B cell (primary cell): ENCODE measurements at regions of chr3 and their contacts with region 1.

Region 1: GRCh38 chr3:53045518-53046170 is at the start of gene SFMBT1:
- DNase-seq: peak; percentile 92
- ATAC-seq: peak; percentile 51
- H3K4me3 ChIP-seq: peak within 1 kb of the TSS; percentile 41 to 94 (median 84)
- H3K4me3 Mint-ChIP-seq: peak within 1 kb of the TSS; percentile 98
- H3K27ac ChIP-seq: peak within 1 kb of the TSS; percentile 83 to 88
- H3K27ac Mint-ChIP-seq: peak within 1 kb of the TSS; percentile 99
- H3K4me1 ChIP-seq: peaks cover 19 to 30% of the 10 kb centered on the region in 2 donors
- H3K4me1 Mint-ChIP-seq: peaks cover 43% of the 10 kb centered on the region
- H3K27me3 ChIP-seq: no peaks in the 10 kb centered on the region
- H3K27me3 Mint-ChIP-seq: no peaks in the 10 kb centered on the region
- CTCF ChIP-seq: no peak
- total RNA-seq, gene SFMBT1: 55.8 and 60.3 TPM in 2 replicates

Region 2: DNA sequence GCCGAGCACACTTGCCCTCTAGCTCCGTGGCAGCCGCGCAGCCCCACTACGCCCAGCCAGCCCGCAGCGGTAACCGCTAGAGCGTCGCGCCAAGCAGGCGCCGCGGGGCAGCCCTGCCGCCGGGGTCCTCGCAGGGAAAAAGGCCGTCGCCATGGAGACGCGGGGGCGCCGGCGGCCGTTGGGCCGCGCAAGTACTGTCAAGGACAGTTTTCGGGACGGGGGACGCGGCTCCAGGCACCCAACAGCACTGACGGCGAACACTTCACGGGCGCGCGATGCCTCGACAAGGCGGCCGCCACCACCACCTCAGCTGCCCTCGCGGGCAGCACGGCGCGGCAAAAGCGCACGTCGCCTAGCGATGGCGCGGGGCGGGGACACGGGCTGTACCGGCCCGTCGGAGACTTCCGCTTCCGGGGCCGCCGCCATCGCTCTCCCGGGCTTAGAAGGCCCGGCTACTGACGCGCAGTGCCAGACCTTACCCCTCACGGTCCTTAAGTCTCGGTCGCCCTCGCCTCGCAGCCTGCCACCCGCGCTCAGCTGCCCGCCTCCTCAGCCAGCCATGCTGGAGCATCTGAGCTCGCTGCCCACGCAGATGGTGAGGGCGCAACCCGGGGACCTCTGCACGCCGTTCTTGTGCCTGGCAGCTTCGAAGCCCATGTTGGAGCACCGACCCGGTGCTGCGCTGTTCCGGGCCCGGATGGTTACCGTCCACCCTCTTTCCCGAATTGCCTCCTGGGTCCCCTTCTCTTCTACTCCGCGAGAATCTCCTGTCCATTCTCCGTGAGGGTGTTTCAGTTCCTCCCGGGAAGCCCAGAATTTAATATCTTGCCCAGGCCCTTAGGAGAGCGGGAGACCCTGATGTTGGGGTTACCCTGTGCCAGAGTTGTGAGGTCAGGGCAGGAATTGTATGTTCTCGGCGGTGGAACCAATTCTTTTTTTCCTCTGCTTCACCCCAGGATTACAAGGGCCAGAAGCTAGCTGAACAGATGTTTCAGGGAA is 339.7 kb before region 1 on chr3 and contains the starts of genes GLT8D1 and SPCS1:
- CTCF ChIA-PET with region 1: no interaction called
- POLR2A ChIA-PET with region 1: no interaction called
- intact Hi-C with region 1: loop called (anchors 2 kb)
- DNase-seq: peak; percentile 97
- ATAC-seq: peak; percentile 86
- H3K4me3 ChIP-seq: peak within 1 kb of the TSS; percentile 75 to 91 (median 82)
- H3K4me3 Mint-ChIP-seq: peak within 1 kb of the TSS; percentile 96
- H3K27ac ChIP-seq: peak within 1 kb of the TSS; percentile 66 to 95
- H3K27ac Mint-ChIP-seq: peak within 1 kb of the TSS; percentile 97
- H3K4me1 ChIP-seq: peaks cover 40 to 44% of the 10 kb centered on the region in 2 donors
- H3K4me1 Mint-ChIP-seq: peaks cover 46% of the 10 kb centered on the region
- H3K27me3 ChIP-seq: no peaks in the 10 kb centered on the region
- H3K27me3 Mint-ChIP-seq: no peaks in the 10 kb centered on the region
- CTCF ChIP-seq: no peak
- total RNA-seq, gene GLT8D1: 28.7 and 32.5 TPM in 2 replicates
- total RNA-seq, gene SPCS1: 54.3 and 64.5 TPM in 2 replicates

Region 3: GRCh38 chr3:52770496-52771333 is 274.9 kb before region 1 on chr3 and contains the start of gene NEK4:
- CTCF ChIA-PET with region 1: interaction called, 9 read pairs
- POLR2A ChIA-PET with region 1: interaction called, 3 read pairs
- intact Hi-C with region 1: loop called (anchors 2 kb)
- DNase-seq: peak; percentile 93
- ATAC-seq: peak; percentile 96
- H3K4me3 ChIP-seq: peak within 1 kb of the TSS; percentile 57 to 85 (median 70)
- H3K4me3 Mint-ChIP-seq: peak within 1 kb of the TSS; percentile 99
- H3K27ac ChIP-seq: peak within 1 kb of the TSS; percentile 71 to 89
- H3K27ac Mint-ChIP-seq: peak within 1 kb of the TSS; percentile 98
- H3K4me1 ChIP-seq: peaks cover 9 to 12% of the 10 kb centered on the region in 2 donors
- H3K4me1 Mint-ChIP-seq: peaks cover 18% of the 10 kb centered on the region
- H3K27me3 ChIP-seq: no peaks in the 10 kb centered on the region
- H3K27me3 Mint-ChIP-seq: no peaks in the 10 kb centered on the region
- CTCF ChIP-seq: peak; percentile 27
- total RNA-seq, gene NEK4: 33.8 and 38.4 TPM in 2 replicates

Region 4: GRCh38 chr3:52934630-52935530 is 110.8 kb before region 1 on chr3:
- CTCF ChIA-PET with region 1: interaction called, 15 read pairs
- POLR2A ChIA-PET with region 1: interaction called, 5 read pairs
- intact Hi-C with region 1: loop called (anchors 1 kb)
- DNase-seq: peak; percentile 69
- ATAC-seq: peak; percentile 87
- H3K4me3 ChIP-seq: no peak overlapping the region
- H3K4me3 Mint-ChIP-seq: no peak overlapping the region
- H3K27ac ChIP-seq: peak overlapping the region in 1 of 2 donors; percentile 50
- H3K27ac Mint-ChIP-seq: peak overlapping the region; percentile 53
- H3K4me1 ChIP-seq: peaks cover 19 to 20% of the 10 kb centered on the region in 2 donors
- H3K4me1 Mint-ChIP-seq: peaks cover 21% of the 10 kb centered on the region
- H3K27me3 ChIP-seq: no peaks in the 10 kb centered on the region
- H3K27me3 Mint-ChIP-seq: no peaks in the 10 kb centered on the region
- CTCF ChIP-seq: peak; percentile 83

Region 5: DNA sequence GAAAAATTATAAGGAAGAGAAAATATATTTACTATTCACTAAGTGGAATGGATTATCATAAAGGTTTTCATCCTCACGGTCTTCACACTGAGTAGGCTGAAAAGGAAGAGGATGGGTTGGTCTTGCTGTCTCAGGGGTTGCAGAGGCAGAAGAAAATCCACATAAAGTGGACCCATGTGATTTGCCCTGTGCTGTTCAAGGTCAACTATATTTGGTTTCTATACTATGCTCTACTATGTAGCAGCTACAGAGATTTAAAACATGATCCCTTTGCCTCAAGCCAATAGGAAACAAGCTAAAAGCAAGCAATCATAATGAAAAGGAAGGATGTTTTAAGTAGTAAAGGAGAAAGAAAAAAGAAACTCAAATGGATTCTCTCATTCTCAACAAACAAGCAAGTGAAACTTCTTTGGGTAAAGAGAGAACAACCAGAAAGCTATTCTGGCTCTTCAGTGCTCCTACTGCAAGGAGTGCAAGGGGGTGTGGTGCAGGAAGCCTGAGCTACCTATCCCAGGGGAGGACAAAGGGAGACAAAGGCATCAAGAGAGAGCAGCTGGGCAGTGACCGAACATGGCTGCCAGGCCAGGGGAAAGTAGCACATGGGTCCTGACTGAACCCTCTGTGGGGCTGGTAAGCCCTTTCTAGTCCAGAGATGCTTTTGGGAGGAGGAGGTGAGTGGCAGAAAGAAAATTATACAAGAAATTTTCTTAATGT is 35.7 kb before region 1 on chr3:
- CTCF ChIA-PET with region 1: no interaction called
- POLR2A ChIA-PET with region 1: no interaction called
- intact Hi-C with region 1: loop called (anchors 5 kb)
- DNase-seq: no peak
- ATAC-seq: peak; percentile 17
- H3K4me3 ChIP-seq: no peak overlapping the region
- H3K4me3 Mint-ChIP-seq: no peak overlapping the region
- H3K27ac ChIP-seq: no peak overlapping the region
- H3K27ac Mint-ChIP-seq: peak overlapping the region; percentile 35
- H3K4me1 ChIP-seq: peaks cover 8 to 11% of the 10 kb centered on the region in 2 donors
- H3K4me1 Mint-ChIP-seq: peaks cover 38% of the 10 kb centered on the region
- H3K27me3 ChIP-seq: no peaks in the 10 kb centered on the region
- H3K27me3 Mint-ChIP-seq: no peaks in the 10 kb centered on the region
- CTCF ChIP-seq: no peak

Region 6: GRCh38 chr3:53211706-53212702 is 166.4 kb after region 1 on chr3:
- CTCF ChIA-PET with region 1: no interaction called
- POLR2A ChIA-PET with region 1: no interaction called
- intact Hi-C with region 1: no loop called
- DNase-seq: no peak
- ATAC-seq: no peak
- H3K4me3 ChIP-seq: no peak overlapping the region
- H3K4me3 Mint-ChIP-seq: no peak overlapping the region
- H3K27ac ChIP-seq: no peak overlapping the region
- H3K27ac Mint-ChIP-seq: no peak overlapping the region
- H3K4me1 ChIP-seq: no peaks in the 10 kb centered on the region
- H3K4me1 Mint-ChIP-seq: no peaks in the 10 kb centered on the region
- H3K27me3 ChIP-seq: no peaks in the 10 kb centered on the region
- H3K27me3 Mint-ChIP-seq: no peaks in the 10 kb centered on the region
- CTCF ChIP-seq: no peak

Region 7: DNA sequence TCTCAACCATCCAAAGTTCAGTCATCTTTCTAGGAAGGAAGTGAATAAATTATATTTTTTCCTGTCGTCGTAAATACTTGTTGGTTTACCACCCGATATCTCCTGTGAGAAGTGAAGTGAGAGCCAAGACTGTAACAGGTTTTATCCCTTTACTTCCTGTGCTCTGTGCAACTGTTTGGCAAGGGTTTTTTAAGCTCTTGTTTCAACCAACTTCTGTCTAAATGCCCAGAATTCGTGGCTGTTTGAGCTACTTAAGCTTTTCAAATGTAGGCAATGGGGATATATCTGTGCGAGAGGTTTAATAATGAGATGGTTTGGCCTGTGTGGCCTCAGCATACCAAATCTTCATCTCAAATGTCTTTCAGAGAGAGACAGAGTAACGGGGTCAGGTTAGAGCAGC is 1747.5 kb after region 1 on chr3:
- CTCF ChIA-PET with region 1: no interaction called
- POLR2A ChIA-PET with region 1: no interaction called
- intact Hi-C with region 1: no loop called
- DNase-seq: no peak
- ATAC-seq: no peak
- H3K4me3 ChIP-seq: no peak overlapping the region
- H3K4me3 Mint-ChIP-seq: no peak overlapping the region
- H3K27ac ChIP-seq: no peak overlapping the region
- H3K27ac Mint-ChIP-seq: no peak overlapping the region
- H3K4me1 ChIP-seq: no peaks in the 10 kb centered on the region
- H3K4me1 Mint-ChIP-seq: no peaks in the 10 kb centered on the region
- H3K27me3 ChIP-seq: no peaks in the 10 kb centered on the region
- H3K27me3 Mint-ChIP-seq: no peaks in the 10 kb centered on the region
- CTCF ChIP-seq: no peak